AG04449 (cell line): ENCODE measurements at regions of chr15 and their contacts with region 1.

Region 1: GRCh38 chr15:83436458-83437158 is 10.5 kb upstream of the SH3GL3 start:
- DNase-seq: peak; percentile 9
- H3K4me3 ChIP-seq: no peak overlapping the region
- CTCF ChIP-seq: peak; percentile 53

Region 2: GRCh38 chr15:83262594-83263315 is 173.9 kb before region 1 on chr15:
- CTCF ChIA-PET with region 1: interaction called, 10 read pairs
- POLR2A ChIA-PET with region 1: no interaction called
- DNase-seq: no peak
- H3K4me3 ChIP-seq: no peak overlapping the region
- CTCF ChIP-seq: no peak

Region 3: GRCh38 chr15:83422081-83422480 is 14.5 kb before region 1 on chr15:
- CTCF ChIA-PET with region 1: interaction called, 19 read pairs
- POLR2A ChIA-PET with region 1: no interaction called
- DNase-seq: no peak
- H3K4me3 ChIP-seq: no peak overlapping the region
- CTCF ChIP-seq: no peak

Region 4: GRCh38 chr15:83446904-83447709 is 10.5 kb after region 1 on chr15 and contains the start of gene SH3GL3:
- CTCF ChIA-PET with region 1: interaction called, 35 read pairs
- POLR2A ChIA-PET with region 1: no interaction called
- DNase-seq: no peak
- H3K4me3 ChIP-seq: peak within 1 kb of the TSS; percentile 55
- CTCF ChIP-seq: peak; percentile 16

Region 5: DNA sequence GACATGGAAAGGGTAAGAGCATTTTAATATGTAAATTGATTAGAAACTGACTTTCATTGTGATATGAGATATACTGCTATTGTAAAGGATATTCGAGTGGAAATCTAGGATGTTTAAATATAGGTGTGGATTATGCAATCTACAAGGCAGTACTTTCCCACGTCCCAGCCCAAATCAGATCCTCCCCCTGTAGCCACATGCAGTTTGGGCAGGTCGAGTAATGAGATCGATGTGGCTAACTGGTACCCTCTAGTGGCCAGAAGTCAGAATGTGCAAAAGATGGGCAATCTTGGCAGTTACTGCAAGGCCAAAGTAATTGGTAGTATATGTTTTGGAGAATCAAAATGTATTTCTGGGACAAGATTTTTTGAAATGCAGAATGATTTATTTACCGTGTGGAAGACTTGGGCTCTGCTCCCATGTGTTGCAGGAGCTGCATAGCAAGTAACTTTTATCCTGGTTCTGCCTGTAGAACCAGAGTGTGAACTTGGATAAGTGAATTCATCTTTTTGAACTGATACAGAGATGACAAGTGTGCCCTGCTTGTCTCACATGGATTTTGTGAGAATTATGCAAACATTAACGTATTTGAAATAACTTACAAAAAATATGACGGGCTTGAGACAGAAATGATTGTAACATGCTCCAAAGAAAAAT is 122.8 kb after region 1 on chr15:
- CTCF ChIA-PET with region 1: interaction called, 176 read pairs
- POLR2A ChIA-PET with region 1: no interaction called
- DNase-seq: peak; percentile 21
- H3K4me3 ChIP-seq: no peak overlapping the region
- CTCF ChIP-seq: peak; percentile 81

Region 6: DNA sequence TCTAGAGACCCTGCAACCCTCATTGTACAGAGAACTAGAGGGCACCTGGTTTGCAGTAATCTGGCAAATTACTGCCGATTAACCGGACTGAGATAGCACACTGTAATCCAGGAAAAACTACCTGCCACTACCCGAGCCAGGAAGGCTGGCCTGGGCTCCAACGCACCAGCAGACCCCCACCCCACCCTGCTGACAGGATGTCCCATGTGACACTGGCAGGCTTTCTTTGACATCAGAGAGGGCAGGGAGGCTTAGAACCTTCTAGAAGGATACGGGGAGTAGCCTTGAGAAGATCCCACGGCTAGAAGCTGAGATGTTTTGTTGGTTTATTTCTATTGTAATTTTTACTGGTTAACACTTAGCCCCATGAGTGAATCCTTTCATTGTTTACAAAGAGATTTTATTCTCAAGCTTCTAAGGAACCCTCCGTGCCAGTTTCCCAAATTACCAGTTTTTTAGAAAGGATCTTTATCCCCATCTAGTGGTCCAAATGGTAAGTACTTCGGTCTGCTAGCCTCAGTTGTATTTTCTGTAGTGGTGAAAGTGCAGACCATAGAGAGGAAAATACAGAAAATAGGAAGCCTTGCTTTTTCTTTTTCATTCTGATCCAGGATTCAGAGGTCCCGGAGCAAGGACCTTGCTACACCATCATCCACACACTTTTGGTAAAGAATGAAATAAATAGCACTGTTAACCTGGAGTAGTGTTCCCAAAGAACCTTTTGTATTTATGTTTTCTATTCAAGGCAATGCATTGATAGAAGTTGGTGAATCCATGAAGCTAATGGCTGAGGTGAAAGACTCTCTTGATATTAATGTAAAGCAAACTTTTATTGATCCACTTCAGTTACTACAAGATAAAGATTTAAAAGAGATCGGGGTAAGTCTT is 135.5 kb after region 1 on chr15:
- CTCF ChIA-PET with region 1: interaction called, 32 read pairs
- POLR2A ChIA-PET with region 1: no interaction called
- DNase-seq: no peak
- H3K4me3 ChIP-seq: no peak overlapping the region
- CTCF ChIP-seq: peak; percentile 37